ENCODE measurements at regions of chr13 and their contacts with region 1.

Region 1: DNA sequence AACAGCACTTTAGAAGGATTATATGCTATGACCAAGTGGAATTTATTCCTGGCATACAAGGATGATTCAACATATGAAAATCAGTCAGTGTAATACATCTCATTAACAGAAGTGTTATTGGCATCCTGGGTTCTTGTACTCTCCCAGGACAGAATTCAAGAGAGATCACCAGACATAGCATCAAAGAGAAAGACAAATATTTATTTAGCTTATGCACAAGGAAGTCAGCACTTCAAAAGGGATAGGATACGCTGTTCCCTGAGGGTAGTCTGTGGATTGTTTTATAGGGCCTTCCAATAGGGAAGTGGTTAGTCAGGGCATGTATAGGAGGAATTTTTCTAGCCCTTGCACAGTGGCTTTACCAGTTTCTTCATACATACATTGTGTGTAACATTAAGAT is 1238.0 kb downstream of the PCDH17 start:
- DNase-seq: no peak
- H3K4me3 ChIP-seq: no peak overlapping the region
- H3K27ac ChIP-seq: no peak overlapping the region
- H3K4me1 ChIP-seq: no peaks in the 10 kb centered on the region
- H3K27me3 ChIP-seq: no peaks in the 10 kb centered on the region
- CTCF ChIP-seq: no peak
- EP300 ChIP-seq: no peak
- POLR2A ChIP-seq: no peak

Region 2: GRCh38 chr13:58823701-58824100 is 45.9 kb before region 1 on chr13:
- in situ Hi-C with region 1: no loop called
- intact Hi-C with region 1: loop called (anchors 2 kb)
- DNase-seq: no peak
- H3K4me3 ChIP-seq: no peak overlapping the region
- H3K27ac ChIP-seq: no peak overlapping the region
- H3K4me1 ChIP-seq: no peaks in the 10 kb centered on the region
- H3K27me3 ChIP-seq: no peaks in the 10 kb centered on the region
- CTCF ChIP-seq: no peak
- EP300 ChIP-seq: no peak
- POLR2A ChIP-seq: no peak

Measured in transverse colon (tissue), 4 donors.